HepG2 (cell line): ENCODE measurements at regions of chr2 and their contacts with region 1.

Region 1: GRCh38 chr2:28594289-28595108 is 98.6 kb downstream of the PLB1 start:
- DNase-seq: peak; percentile 72
- ATAC-seq: peak; percentile 83
- H3K4me3 ChIP-seq: peak overlapping the region in 1 of 3 experiments; percentile 31; a peak in 1 of 6 replicates
- H3K27ac ChIP-seq: no peak overlapping the region
- H3K4me1 ChIP-seq: peaks cover 16% of the 10 kb centered on the region
- H3K27me3 ChIP-seq: peaks cover 4 to 38% of the 10 kb centered on the region in 2 experiments; a peak in 4 of 5 replicates
- CTCF ChIP-seq: peak; percentile 95
- EP300 ChIP-seq: no peak
- POLR2A ChIP-seq: no peak
- RAD21 ChIP-seq: peak; percentile 82

Region 2: GRCh38 chr2:28356095-28356911 is 238.2 kb before region 1 on chr2:
- CTCF ChIA-PET with region 1: no interaction called
- POLR2A ChIA-PET with region 1: no interaction called
- in situ Hi-C with region 1: no loop called
- intact Hi-C with region 1: no loop called
- DNase-seq: no peak
- ATAC-seq: peak; percentile 68
- H3K4me3 ChIP-seq: peak overlapping the region in 2 of 3 experiments; percentile 6 to 63; a peak in 2 of 6 replicates
- H3K27ac ChIP-seq: no peak overlapping the region
- H3K4me1 ChIP-seq: peaks cover 50% of the 10 kb centered on the region
- H3K27me3 ChIP-seq: peaks cover 0 to 19% of the 10 kb centered on the region in 2 experiments; a peak in 4 of 5 replicates
- CTCF ChIP-seq: 0 out of 2 replicates have a peak, but pooled peaks have one; percentile 4
- EP300 ChIP-seq: no peak
- POLR2A ChIP-seq: no peak
- RAD21 ChIP-seq: no peak

Region 3: DNA sequence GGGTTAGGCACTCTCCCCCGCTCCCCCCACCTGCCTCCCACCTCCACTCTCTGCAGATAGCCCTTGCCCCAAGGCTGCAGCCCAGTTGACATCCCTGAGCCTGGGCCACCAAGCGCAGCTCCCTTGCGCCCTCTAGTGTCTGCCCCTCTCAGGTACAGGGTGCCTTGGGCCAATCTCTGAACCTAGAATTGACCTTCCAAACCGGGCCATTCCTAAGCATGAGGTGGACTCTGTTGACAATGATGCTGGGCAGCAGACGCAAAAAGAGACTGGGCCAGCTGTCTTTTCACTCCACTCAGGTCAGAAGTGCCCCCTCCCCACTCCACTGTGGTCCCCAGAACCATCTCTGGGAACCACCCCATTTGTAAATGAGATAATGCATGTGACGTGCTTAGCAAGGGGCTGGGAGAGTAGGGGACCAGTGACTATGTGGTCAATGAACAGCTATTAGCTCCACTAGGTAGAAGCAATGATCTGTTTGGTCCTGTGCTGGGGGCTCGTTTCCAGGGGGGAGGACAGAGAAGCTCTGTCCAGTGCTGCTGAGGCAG is 141.9 kb before region 1 on chr2:
- CTCF ChIA-PET with region 1: no interaction called
- POLR2A ChIA-PET with region 1: no interaction called
- in situ Hi-C with region 1: no loop called
- intact Hi-C with region 1: no loop called
- DNase-seq: peak; percentile 58
- ATAC-seq: peak; percentile 92
- H3K4me3 ChIP-seq: no peak overlapping the region
- H3K27ac ChIP-seq: no peak overlapping the region
- H3K4me1 ChIP-seq: no peaks in the 10 kb centered on the region
- H3K27me3 ChIP-seq: peaks cover 0 to 7% of the 10 kb centered on the region in 2 experiments; a peak in 3 of 5 replicates
- CTCF ChIP-seq: peak; percentile 99
- EP300 ChIP-seq: no peak
- POLR2A ChIP-seq: no peak
- RAD21 ChIP-seq: peak; percentile 91

Region 4: GRCh38 chr2:28583899-28584553 is 10.5 kb before region 1 on chr2:
- CTCF ChIA-PET with region 1: no interaction called
- POLR2A ChIA-PET with region 1: interaction called, 11 read pairs
- in situ Hi-C with region 1: no loop called
- intact Hi-C with region 1: no loop called
- DNase-seq: peak; percentile 74
- ATAC-seq: peak; percentile 80
- H3K4me3 ChIP-seq: peak overlapping the region in 1 of 3 experiments; percentile 18; a peak in 1 of 6 replicates
- H3K27ac ChIP-seq: no peak overlapping the region
- H3K4me1 ChIP-seq: peaks cover 14% of the 10 kb centered on the region
- H3K27me3 ChIP-seq: peaks cover 1 to 32% of the 10 kb centered on the region in 2 experiments; a peak in 3 of 5 replicates
- CTCF ChIP-seq: no peak
- EP300 ChIP-seq: peak; percentile 23 to 41; a peak in 2 of 4 replicates
- POLR2A ChIP-seq: no peak
- RAD21 ChIP-seq: no peak